Endothelial cell of umbilical vein (primary cell): ENCODE measurements at regions of chr15 and their contacts with region 1.

Region 1: DNA sequence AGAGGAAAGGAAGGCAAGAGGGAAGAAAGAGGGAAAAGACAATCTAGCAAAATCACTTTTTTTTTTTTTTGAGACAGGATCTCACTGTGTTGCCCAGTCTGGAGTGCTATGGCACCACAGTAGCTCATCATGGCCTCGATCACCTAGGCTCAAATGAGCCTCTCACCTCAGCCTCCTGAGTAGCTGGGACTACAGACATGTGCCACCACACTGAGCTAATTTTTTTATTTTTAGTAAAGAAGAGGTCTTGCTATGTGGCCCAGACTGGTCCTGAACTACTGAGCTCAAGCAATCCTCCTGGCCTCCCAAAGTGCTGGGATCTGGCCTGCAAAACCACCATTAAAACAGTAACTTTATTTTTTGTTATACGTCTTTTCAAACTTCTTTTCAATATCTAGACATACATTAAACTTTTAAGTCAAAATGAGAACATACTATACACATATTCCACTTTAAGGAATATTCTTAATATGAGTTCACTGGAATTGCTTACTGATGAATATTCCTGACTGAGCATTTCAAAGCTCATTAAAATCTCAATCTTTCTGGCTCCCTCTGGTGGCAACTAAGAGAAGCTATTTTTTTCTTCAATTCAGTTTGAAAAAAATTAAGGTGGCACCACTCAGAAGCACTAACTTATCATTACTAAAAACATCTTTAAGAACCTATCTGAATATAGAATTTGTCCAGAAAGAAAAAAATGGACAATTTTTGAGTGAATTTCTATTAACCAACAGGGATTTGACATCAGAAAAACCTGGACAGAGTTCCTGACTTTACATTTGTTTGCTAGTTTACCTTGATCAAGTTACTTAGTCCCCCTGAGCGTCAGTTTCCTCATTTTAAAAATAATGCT is 40.9 kb downstream of the UACA start:
- DNase-seq: peak; percentile 62
- H3K4me3 ChIP-seq: no peak overlapping the region
- H3K27ac ChIP-seq: peak overlapping the region; percentile 36
- H3K4me1 ChIP-seq: peaks cover 30% of the 10 kb centered on the region
- H3K27me3 ChIP-seq: no peaks in the 10 kb centered on the region
- CTCF ChIP-seq: peak; percentile 44
- POLR2A ChIP-seq: no peak

Region 2: GRCh38 chr15:70569091-70569621 is 153.3 kb before region 1 on chr15:
- CTCF ChIA-PET with region 1: interaction called, 49 read pairs
- POLR2A ChIA-PET with region 1: no interaction called
- dilution Hi-C with region 1: no loop called
- intact Hi-C with region 1: loop called (anchors 10 kb)
- DNase-seq: peak; percentile 71
- H3K4me3 ChIP-seq: no peak overlapping the region
- H3K27ac ChIP-seq: no peak overlapping the region
- H3K4me1 ChIP-seq: no peaks in the 10 kb centered on the region
- H3K27me3 ChIP-seq: peaks cover 2 to 5% of the 10 kb centered on the region in 2 experiments
- CTCF ChIP-seq: peak; percentile 55 to 77
- POLR2A ChIP-seq: no peak

Region 3: GRCh38 chr15:70679919-70680231 is 42.6 kb before region 1 on chr15:
- CTCF ChIA-PET with region 1: interaction called, 309 read pairs
- POLR2A ChIA-PET with region 1: no interaction called
- dilution Hi-C with region 1: no loop called
- intact Hi-C with region 1: loop called (anchors 1 kb)
- DNase-seq: no peak
- H3K4me3 ChIP-seq: no peak overlapping the region
- H3K27ac ChIP-seq: no peak overlapping the region
- H3K4me1 ChIP-seq: peaks cover 12% of the 10 kb centered on the region
- H3K27me3 ChIP-seq: no peaks in the 10 kb centered on the region
- CTCF ChIP-seq: no peak
- POLR2A ChIP-seq: no peak

Region 4: DNA sequence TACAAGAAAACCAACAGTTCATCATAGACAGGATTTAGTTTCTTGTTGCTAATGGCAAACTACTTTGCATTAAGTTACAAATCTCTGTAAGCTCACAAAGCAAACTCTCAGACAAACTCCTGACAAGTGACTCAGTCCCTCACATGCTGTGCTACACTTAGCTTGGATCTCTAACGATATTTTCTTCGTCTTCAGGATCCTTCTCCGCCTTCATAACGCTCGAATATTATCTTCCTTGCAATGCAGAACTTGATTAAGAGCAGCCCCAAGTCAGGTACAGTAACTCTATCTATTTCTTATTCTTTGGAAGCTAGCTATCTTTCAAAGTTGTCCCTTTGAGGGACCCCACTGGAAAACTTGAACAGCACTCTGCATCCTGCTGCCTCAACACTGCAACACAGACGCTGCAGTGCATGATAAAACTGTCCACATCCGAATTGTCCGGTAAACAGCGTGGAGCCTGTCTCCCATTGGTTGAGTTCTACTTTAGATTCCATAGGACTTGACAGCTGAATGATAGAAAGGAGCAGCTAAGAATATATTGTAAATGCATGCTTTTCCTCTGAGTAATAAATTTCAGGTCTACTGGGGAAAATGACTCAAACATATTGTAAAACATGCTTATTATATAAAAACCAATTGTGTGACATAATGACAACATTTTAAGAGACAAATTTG is 20.5 kb before region 1 on chr15:
- CTCF ChIA-PET with region 1: interaction called, 73 read pairs
- POLR2A ChIA-PET with region 1: interaction called, 9 read pairs
- dilution Hi-C with region 1: no loop called
- intact Hi-C with region 1: loop called (anchors 1 kb)
- DNase-seq: peak; percentile 86
- H3K4me3 ChIP-seq: peak overlapping the region in 2 of 3 experiments; percentile 35 to 96
- H3K27ac ChIP-seq: peak overlapping the region; percentile 94
- H3K4me1 ChIP-seq: peaks cover 55% of the 10 kb centered on the region
- H3K27me3 ChIP-seq: no peaks in the 10 kb centered on the region
- CTCF ChIP-seq: no peak
- POLR2A ChIP-seq: peak; percentile 20

Region 5: GRCh38 chr15:70748281-70748747 is 25.8 kb after region 1 on chr15:
- CTCF ChIA-PET with region 1: interaction called, 12 read pairs
- POLR2A ChIA-PET with region 1: interaction called, 3 read pairs
- dilution Hi-C with region 1: no loop called
- intact Hi-C with region 1: no loop called
- DNase-seq: no peak
- H3K4me3 ChIP-seq: no peak overlapping the region
- H3K27ac ChIP-seq: no peak overlapping the region
- H3K4me1 ChIP-seq: peaks cover 3% of the 10 kb centered on the region
- H3K27me3 ChIP-seq: no peaks in the 10 kb centered on the region
- CTCF ChIP-seq: no peak
- POLR2A ChIP-seq: no peak

Region 6: DNA sequence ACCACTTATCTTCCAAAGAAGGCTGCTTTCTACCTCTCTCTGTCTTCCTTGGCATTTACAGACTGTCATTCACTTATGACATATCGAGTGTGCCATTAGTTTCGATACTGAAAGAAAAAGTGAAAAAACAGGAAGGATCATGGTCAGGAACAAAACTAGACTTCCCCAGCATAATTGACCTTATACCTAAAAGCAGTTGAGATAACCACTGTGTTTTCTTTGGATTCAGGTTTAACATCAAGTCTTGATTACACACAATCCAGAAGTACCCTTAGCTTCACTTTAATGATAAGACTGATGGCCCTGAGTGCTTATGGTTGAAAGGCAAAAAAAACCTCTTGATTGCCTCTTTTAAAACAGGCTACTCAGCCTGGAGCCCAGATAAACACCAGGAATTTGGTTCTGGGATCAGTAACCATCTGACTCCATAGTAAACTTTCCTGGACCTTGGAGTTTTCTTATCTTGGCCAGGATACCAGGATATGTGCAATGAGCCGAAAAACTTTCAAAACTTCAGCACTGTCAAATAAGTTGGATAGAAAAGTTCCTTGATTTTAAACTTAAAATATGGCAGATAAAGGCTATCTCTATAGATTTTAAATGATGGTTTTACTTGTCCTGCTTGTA is 45.9 kb after region 1 on chr15:
- CTCF ChIA-PET with region 1: interaction called, 16 read pairs
- POLR2A ChIA-PET with region 1: interaction called, 3 read pairs
- dilution Hi-C with region 1: no loop called
- intact Hi-C with region 1: no loop called
- DNase-seq: peak; percentile 55
- H3K4me3 ChIP-seq: peak overlapping the region in 1 of 3 experiments; percentile 14
- H3K27ac ChIP-seq: peak overlapping the region; percentile 15
- H3K4me1 ChIP-seq: peaks cover 36% of the 10 kb centered on the region
- H3K27me3 ChIP-seq: no peaks in the 10 kb centered on the region
- CTCF ChIP-seq: no peak
- POLR2A ChIP-seq: no peak

Region 7: GRCh38 chr15:70826634-70827033 is 104.1 kb after region 1 on chr15:
- CTCF ChIA-PET with region 1: interaction called, 15 read pairs
- POLR2A ChIA-PET with region 1: no interaction called
- dilution Hi-C with region 1: no loop called
- intact Hi-C with region 1: no loop called
- DNase-seq: peak; percentile 36
- H3K4me3 ChIP-seq: no peak overlapping the region
- H3K27ac ChIP-seq: no peak overlapping the region
- H3K4me1 ChIP-seq: no peaks in the 10 kb centered on the region
- H3K27me3 ChIP-seq: no peaks in the 10 kb centered on the region
- CTCF ChIP-seq: no peak
- POLR2A ChIP-seq: no peak